Posterior cingulate gyrus (tissue), 11 donors: ENCODE measurements at regions of chr2 and their contacts with region 1.

Region 1: DNA sequence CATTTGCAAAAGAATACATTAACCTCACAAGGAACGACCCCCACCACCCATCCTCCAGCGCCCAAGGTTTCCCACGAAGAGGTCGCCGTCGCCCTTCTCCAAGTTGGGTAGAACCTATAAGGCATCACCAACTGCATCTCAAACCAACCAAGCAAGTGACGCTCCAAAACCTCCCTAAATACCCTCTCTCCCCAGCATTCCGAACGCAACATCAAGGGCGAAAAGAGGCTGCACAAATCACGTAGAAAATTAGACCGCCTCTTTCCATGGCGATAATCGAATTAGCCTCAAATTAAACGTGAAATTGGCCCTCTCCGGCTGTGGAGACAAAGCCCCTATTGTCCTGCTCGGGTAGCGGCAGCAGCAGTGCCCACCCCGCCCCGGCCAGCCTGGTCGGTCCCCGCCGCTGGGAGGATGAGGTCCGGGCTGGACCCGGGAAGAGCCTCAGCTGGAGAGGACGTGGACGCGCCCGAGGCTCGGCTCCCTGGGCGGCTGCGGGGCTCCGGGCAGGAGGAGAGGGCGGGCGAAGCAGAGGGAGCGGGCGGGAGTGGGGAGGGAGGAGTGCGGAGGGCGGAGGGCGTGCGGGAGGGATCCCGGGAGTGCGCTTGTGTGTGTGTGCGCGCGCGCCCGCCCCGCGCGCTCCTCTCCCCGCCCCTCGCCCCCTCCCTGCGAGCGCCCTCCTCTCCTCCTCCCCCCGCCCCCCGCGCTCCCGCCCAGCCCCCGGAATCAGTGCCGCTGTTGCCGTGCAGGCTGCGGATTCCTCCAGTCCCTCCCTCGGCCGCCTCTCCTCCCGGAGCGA is at the start of gene SPTBN1:
- DNase-seq: peak; percentile 87 to 99 (median 94)

Region 2: GRCh38 chr2:54115284-54116137 is 340.3 kb before region 1 on chr2 and contains the start of gene ACYP2:
- intact Hi-C with region 1: loop called (anchors 10 kb)
- DNase-seq: peak; percentile 89 to 99 (median 95)

Region 3: DNA sequence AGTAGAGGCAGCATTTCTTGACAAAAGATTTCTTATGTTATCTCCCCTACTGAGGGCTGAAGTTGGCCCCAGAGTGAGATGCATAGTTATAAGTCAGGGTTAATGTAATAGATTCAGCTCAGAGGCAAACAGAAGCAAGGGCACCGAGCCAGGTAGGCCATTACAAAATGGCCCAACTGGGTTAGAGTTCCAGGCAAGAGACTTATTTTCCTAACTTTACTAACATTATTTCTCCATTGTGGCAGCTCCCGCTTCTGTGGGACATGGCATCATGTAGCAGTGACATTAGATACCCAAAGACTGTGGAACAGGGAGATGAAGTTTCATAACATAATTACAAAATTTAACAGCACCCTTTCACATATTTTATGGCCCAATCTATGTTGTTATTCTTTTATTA is 226.8 kb before region 1 on chr2:
- intact Hi-C with region 1: loop called (anchors 10 kb)
- DNase-seq: no peak

Region 4: GRCh38 chr2:54330162-54330925 is 125.4 kb before region 1 on chr2:
- intact Hi-C with region 1: loop called (anchors 5 kb)
- DNase-seq: peak; percentile 94 to 99 (median 97)

Region 5: GRCh38 chr2:54387059-54387991 is 68.4 kb before region 1 on chr2:
- intact Hi-C with region 1: loop called (anchors 10 kb)
- DNase-seq: no peak

Region 6: DNA sequence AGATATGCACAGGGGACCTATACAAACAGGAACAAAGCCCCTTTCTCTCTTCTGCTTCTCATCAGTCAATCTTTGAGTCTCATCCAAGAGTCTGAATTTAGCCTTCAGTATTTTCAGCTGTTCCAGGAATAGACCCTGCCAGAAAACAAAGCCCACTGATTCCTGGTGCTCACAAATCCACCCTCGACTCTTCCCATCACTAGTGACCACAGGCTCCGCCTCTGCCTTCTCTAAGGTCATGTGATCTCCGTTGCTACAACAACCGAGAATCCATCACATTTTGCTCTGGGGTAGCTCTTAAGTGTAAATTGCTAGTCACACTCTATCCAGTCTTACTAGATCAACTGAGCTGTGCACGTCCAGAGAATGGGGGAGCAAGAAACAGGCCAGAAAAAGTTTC is 46.0 kb before region 1 on chr2:
- intact Hi-C with region 1: loop called (anchors 1 kb)
- DNase-seq: peak in 6 of 10 donors; percentile 30 to 92 (median 50)